Right lobe of liver (tissue), 6 donors: ENCODE measurements at regions of chr4 and their contacts with region 1.

Region 1: GRCh38 chr4:20422398-20422797 is 170.7 kb downstream of the SLIT2 start:
- DNase-seq: peak in 2 of 3 donors; percentile 17 to 52
- ATAC-seq: peak; percentile 86 to 93 (median 90)
- H3K4me3 ChIP-seq: no peak overlapping the region
- H3K27ac ChIP-seq: no peak overlapping the region
- H3K4me1 ChIP-seq: no peaks in the 10 kb centered on the region
- H3K27me3 ChIP-seq: no peaks in the 10 kb centered on the region
- CTCF ChIP-seq: peak; percentile 42 to 62 (median 56)
- POLR2A ChIP-seq: no peak

Region 2: DNA sequence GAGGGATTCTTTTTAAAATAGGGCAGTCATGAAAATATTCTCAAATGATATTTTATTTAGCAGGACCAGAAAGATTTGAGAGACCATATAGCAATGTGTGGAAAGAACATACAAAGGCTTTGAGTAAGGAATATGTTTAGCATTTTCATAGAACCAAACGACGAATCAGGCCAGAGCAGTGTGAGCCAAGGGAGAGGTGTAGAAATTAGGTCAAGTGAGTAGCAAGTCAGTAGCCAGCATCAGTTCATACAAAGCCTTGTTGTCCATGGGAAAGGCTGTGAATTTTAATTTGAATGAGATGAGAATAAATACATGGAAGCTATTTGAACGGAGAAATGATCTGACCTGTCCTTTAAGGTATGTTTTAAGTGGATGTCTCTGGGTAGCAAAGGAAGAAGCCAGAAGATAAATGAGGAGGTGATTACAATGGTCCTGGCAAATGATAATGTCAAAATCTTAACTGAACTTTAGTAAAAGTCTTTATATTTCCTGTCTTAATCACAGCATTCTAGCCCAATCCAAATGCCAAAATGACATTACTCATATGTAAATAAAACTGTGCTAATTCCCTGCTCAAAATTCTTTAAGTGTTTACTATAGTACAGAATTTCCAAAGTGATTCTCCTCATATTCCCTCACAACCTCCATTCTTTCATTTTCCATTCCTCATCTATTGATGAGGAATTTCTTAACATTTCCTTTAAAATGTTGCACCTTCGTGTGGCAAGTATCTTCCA is 326.4 kb before region 1 on chr4:
- intact Hi-C with region 1: no loop called
- DNase-seq: no peak
- ATAC-seq: no peak
- H3K4me3 ChIP-seq: no peak overlapping the region
- H3K27ac ChIP-seq: no peak overlapping the region
- H3K4me1 ChIP-seq: no peaks in the 10 kb centered on the region
- H3K27me3 ChIP-seq: no peaks in the 10 kb centered on the region
- CTCF ChIP-seq: no peak
- POLR2A ChIP-seq: no peak

Region 3: GRCh38 chr4:20544645-20545044 is 122.2 kb after region 1 on chr4:
- intact Hi-C with region 1: loop called in 1 of 2 experiments (anchors 10 kb)
- DNase-seq: no peak
- ATAC-seq: peak; percentile 58 to 73 (median 70)
- H3K4me3 ChIP-seq: no peak overlapping the region
- H3K27ac ChIP-seq: no peak overlapping the region
- H3K4me1 ChIP-seq: no peaks in the 10 kb centered on the region
- H3K27me3 ChIP-seq: no peaks in the 10 kb centered on the region
- CTCF ChIP-seq: peak; percentile 52 to 66 (median 62)
- POLR2A ChIP-seq: no peak

Region 4: GRCh38 chr4:20684852-20685763 is 262.7 kb after region 1 on chr4:
- intact Hi-C with region 1: loop called (anchors 10 kb)
- DNase-seq: no peak
- ATAC-seq: peak; percentile 51 to 68 (median 60)
- H3K4me3 ChIP-seq: no peak overlapping the region
- H3K27ac ChIP-seq: no peak overlapping the region
- H3K4me1 ChIP-seq: no peaks in the 10 kb centered on the region
- H3K27me3 ChIP-seq: no peaks in the 10 kb centered on the region
- CTCF ChIP-seq: peak; percentile 61 to 71 (median 65)
- POLR2A ChIP-seq: no peak